Transverse colon (tissue), 4 donors: ENCODE measurements at regions of chr11 and their contacts with region 1.

Region 1: DNA sequence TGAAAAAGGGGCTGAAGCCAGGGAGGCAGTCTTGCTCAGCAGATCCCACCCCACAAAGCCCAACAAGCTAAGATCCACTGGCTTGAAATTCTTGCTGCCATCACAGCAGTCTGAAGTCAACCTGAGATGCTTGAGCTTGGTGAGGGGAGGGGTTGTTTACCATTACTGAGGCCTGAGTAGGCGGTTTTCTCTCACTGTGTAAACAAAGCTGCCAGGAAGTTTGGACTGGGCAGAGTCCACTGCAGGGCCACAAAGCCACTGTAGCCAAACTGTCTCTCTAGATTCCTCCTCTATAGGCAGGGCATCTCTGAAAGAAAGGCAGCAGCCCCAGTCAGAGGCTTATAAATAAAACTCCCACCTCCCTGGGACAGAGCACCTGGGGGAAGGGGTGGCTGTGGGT is 746.1 kb upstream of the LRRC4C start:
- DNase-seq: no peak
- H3K4me3 ChIP-seq: no peak overlapping the region
- H3K27ac ChIP-seq: no peak overlapping the region
- H3K4me1 ChIP-seq: no peaks in the 10 kb centered on the region
- H3K27me3 ChIP-seq: no peaks in the 10 kb centered on the region
- CTCF ChIP-seq: no peak
- EP300 ChIP-seq: no peak
- POLR2A ChIP-seq: no peak

Region 2: GRCh38 chr11:42957831-42958230 is 752.3 kb after region 1 on chr11:
- in situ Hi-C with region 1: no loop called
- intact Hi-C with region 1: loop called (anchors 5 kb)
- DNase-seq: no peak
- H3K4me3 ChIP-seq: no peak overlapping the region
- H3K27ac ChIP-seq: no peak overlapping the region
- H3K4me1 ChIP-seq: no peaks in the 10 kb centered on the region
- H3K27me3 ChIP-seq: no peaks in the 10 kb centered on the region
- CTCF ChIP-seq: no peak
- EP300 ChIP-seq: no peak
- POLR2A ChIP-seq: no peak